ENCODE measurements at regions of chr6 and their contacts with region 1.

Region 1: GRCh38 chr6:225121-225721 is 67.1 kb upstream of the DUSP22 start:
- DNase-seq: peak; percentile 63
- H3K4me3 Mint-ChIP-seq: peak overlapping the region; percentile 65
- H3K27ac Mint-ChIP-seq: peak overlapping the region; percentile 96
- H3K4me1 Mint-ChIP-seq: peaks cover 89% of the 10 kb centered on the region
- H3K27me3 Mint-ChIP-seq: no peaks in the 10 kb centered on the region

Region 2: GRCh38 chr6:195861-196360 is 29.3 kb before region 1 on chr6:
- intact Hi-C with region 1: loop called (anchors 1 kb)
- DNase-seq: peak; percentile 43
- H3K4me3 Mint-ChIP-seq: no peak overlapping the region
- H3K27ac Mint-ChIP-seq: peak overlapping the region; percentile 24
- H3K4me1 Mint-ChIP-seq: peaks cover 56% of the 10 kb centered on the region
- H3K27me3 Mint-ChIP-seq: peaks cover 5% of the 10 kb centered on the region

Region 3: GRCh38 chr6:251920-252319 is 26.7 kb after region 1 on chr6:
- intact Hi-C with region 1: loop called (anchors 1 kb)
- DNase-seq: no peak
- H3K4me3 Mint-ChIP-seq: peak overlapping the region; percentile 48
- H3K27ac Mint-ChIP-seq: peak overlapping the region; percentile 90
- H3K4me1 Mint-ChIP-seq: peaks cover 38% of the 10 kb centered on the region
- H3K27me3 Mint-ChIP-seq: peaks cover 3% of the 10 kb centered on the region

Region 4: GRCh38 chr6:291697-292505 is 66.7 kb after region 1 on chr6 and contains the start of gene DUSP22:
- intact Hi-C with region 1: loop called (anchors 1 kb)
- DNase-seq: peak; percentile 79
- H3K4me3 Mint-ChIP-seq: peak within 1 kb of the TSS; percentile 94
- H3K27ac Mint-ChIP-seq: peak within 1 kb of the TSS; percentile 99
- H3K4me1 Mint-ChIP-seq: peaks cover 39% of the 10 kb centered on the region
- H3K27me3 Mint-ChIP-seq: no peaks in the 10 kb centered on the region
- total RNA-seq, gene DUSP22: 22.0 and 22.1 TPM in 2 replicates

Region 5: DNA sequence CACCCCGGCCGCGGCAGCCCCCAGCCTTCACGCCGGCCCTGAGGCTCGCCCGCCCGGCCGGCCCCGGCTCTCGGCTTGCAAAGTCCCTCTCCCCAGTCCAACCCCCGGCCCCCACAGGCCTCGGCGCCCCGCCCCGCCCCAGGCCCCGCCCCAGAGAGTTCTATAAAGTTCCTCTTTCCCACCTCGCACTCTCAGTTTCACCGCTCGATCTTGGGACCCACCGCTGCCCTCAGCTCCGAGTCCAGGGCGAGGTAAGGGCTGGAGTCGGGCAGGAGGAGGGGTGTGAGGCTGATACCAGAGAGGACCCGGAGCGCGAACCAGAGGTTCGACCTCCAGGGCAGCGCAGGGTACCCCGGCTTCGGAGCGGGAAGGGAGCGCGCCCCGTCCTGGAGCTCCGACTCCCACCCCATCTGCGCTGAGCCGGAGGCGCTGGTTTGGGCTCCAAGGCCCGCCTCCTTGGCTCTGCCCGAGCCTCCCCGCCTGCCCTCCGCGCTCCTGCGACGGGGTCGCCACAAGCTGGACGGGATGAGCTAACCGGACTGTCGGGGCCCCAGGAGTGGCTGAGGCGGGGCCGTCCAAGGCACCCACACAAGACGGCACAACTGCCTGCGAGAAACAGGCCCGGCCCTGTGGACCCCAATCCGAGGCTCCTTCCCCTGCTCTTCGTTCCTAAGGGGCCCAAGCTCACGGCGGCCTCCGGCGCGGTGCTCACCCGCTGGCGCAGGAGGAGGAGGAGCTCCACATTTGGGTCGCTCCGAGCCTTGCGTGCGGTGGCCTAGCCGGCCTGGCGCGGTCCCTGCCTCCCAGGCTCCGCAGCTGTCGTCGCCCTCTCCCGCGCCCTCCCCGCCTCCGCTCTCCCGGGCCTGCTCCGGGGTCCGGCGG is 166.6 kb after region 1 on chr6 and contains the start of gene IRF4:
- intact Hi-C with region 1: loop called (anchors 2 kb)
- DNase-seq: peak; percentile 69
- H3K4me3 Mint-ChIP-seq: peak within 1 kb of the TSS; percentile 98
- H3K27ac Mint-ChIP-seq: peak within 1 kb of the TSS; percentile 98
- H3K4me1 Mint-ChIP-seq: peaks cover 41% of the 10 kb centered on the region
- H3K27me3 Mint-ChIP-seq: peaks cover 3% of the 10 kb centered on the region
- total RNA-seq, gene IRF4: 911 and 929 TPM in 2 replicates

Region 6: DNA sequence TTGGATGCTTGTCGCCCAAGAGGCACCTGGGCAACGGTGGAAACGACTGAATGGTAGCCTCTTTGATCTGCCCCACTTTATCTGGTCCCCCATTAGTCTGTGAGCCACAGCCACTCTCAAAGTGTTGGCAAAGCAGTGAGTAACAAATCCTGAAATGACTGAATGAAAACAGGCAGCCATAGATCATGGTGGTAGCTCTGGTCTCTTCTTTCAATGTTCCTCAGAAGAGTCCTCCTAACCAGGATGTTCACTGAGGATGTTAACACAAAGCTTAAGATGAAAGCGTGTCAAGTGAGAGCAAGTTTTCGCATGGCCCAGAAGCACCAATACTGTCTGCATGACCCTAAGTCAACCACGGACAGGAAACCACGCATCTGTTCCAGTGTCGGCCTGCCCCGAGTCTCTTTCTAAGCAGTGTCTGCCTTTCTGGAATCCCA is 273.6 kb after region 1 on chr6:
- intact Hi-C with region 1: loop called (anchors 2 kb)
- DNase-seq: peak; percentile 56
- H3K4me3 Mint-ChIP-seq: peak overlapping the region; percentile 80
- H3K27ac Mint-ChIP-seq: peak overlapping the region; percentile 94
- H3K4me1 Mint-ChIP-seq: peaks cover 87% of the 10 kb centered on the region
- H3K27me3 Mint-ChIP-seq: no peaks in the 10 kb centered on the region

Measured in activated T-helper 1 cell treated with anti-CD3 and anti-CD28 coated beads, Interleukin-12 subunit alpha, Interleukin-12 subunit beta, Interleukin-2, Interleukin-4 antibody, amounts not matched to agents 30 ng/mL and 10 ng/mL and 1 ng/mL, durations not matched to agents 14 hours and 24 hours and 36 hours (primary cell).